ENCODE measurements at regions of chr15 and their contacts with region 1.

Region 1: DNA sequence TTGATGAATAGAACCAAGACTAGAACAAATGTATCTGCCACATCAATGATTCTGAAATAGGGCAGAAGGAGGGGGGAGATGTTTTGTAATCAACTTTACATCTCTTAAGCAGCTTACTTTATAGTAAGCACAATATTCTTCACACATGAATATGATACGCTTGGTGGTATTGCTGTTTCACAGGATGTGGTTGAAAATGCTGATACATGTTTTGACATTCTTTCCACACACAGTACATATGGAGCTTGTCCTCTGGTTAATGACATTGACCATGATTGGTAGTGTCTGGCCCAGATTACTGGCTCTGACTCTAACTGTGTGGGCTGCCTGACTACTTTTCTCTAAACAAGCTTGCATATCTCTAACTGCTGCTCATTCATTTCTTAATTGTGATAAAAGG is 168.9 kb downstream of the KLHL25 start:
- DNase-seq: no peak
- ATAC-seq: no peak
- H3K4me3 ChIP-seq: no peak overlapping the region
- H3K27ac ChIP-seq: peak overlapping the region in 1 of 2 donors; percentile 54
- H3K4me1 ChIP-seq: peaks cover 5 to 12% of the 10 kb centered on the region in 2 donors
- H3K27me3 ChIP-seq: no peaks in the 10 kb centered on the region

Region 2: GRCh38 chr15:85515212-85515611 is 110.6 kb before region 1 on chr15:
- intact Hi-C with region 1: no loop called
- DNase-seq: no peak
- ATAC-seq: no peak
- H3K4me3 ChIP-seq: no peak overlapping the region
- H3K27ac ChIP-seq: no peak overlapping the region
- H3K4me1 ChIP-seq: peaks cover 0 to 2% of the 10 kb centered on the region in 2 donors
- H3K27me3 ChIP-seq: no peaks in the 10 kb centered on the region

Region 3: DNA sequence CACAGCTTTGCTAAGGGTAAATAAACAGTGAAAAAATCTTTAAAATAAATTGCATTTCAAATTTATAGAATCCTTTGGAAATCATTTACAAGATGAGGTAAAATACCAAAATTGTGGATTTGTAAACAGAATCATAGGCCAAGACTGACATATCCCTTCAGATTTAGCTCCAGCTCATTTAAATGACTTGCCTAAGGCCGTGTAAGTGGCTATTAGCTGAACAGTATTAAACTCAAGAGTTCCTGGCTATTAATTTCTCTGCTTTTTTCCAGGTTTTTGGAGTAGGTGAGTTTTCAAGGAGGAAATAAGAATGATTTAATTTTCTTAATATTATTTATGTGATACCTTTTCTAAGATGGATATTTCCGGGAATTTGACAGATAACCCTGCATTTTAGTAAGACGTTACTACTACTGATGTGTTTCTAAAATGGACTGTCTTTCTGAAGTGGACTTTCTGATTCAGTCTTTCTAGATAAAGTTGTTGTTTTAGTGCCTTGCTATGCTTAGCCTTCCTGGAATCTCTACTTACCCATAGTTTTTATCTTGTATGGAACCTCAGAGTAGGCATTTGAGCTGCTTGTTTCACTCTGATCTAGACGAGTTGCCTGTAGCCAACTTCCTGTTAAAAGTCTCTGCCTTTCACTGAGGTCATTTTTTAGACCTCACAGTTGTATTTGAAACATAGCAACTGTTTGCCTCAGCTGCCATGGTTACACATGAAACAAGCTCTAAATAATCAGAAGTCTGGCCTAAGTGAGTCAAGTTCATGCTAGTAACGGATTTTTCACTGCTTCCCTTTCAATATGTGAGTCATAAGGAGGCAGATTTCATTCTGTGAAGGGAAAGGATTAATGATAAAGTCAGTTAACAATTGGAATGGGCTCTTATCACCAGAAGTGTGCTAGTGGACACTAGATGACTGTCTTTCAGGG is 41.9 kb after region 1 on chr15:
- intact Hi-C with region 1: loop called (anchors 5 kb)
- DNase-seq: peak in 1 of 2 donors; percentile 68
- ATAC-seq: peak; percentile 94
- H3K4me3 ChIP-seq: no peak overlapping the region
- H3K27ac ChIP-seq: peak overlapping the region; percentile 88 to 90
- H3K4me1 ChIP-seq: peaks cover 3 to 4% of the 10 kb centered on the region in 2 donors
- H3K27me3 ChIP-seq: no peaks in the 10 kb centered on the region

Measured in aorta (tissue), 5 donors.